ENCODE measurements at regions of chr12 and their contacts with region 1.

Region 1: DNA sequence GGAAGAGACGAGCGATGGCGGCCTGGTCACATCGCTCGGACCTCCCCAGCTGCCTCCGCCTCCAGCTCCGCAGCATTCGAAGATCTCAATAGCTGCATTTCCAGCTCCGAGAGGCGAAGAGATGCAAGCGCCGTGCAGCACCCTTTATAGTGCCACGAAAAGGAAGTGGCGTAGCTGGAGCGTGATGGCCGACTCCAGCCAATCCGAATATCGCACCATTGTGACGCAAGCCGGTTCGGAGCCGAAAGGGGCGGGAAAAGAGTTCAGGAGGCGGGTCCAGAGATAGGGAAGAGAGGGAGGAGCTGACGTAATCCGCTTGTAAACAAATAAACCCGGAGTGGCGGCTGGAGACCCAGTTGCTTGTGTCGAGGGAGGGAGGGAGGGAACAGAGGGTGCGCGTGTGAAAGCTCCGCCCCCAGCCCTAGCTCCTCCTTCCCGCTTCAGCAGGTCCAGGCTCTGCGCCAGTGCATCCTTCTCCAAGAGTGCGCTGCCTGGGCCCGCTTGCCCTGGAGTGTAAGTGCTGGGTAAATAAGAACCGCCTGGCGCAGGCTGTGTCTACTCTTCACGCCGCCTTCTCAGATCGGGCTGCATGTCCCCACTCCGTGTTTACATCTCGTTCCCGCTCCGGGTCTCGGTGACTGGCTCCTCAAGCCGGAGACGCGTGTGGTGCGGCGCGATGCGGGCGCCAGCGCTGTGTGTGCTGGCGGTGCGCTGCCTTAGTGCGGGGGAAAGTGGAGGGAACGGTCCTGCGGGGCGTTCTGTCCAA is at the start of gene BTG1:
- DNase-seq: peak; percentile 99
- ATAC-seq: peak; percentile 84
- H3K4me3 ChIP-seq: peak within 1 kb of the TSS; percentile 54 to 78
- H3K27ac ChIP-seq: peak within 1 kb of the TSS; percentile 80
- H3K4me1 ChIP-seq: peaks cover 5 to 18% of the 10 kb centered on the region in 2 experiments; a peak in 3 of 4 replicates
- H3K27me3 ChIP-seq: no peaks in the 10 kb centered on the region
- CTCF ChIP-seq: no peak
- POLR2A ChIP-seq: peak; percentile 99
- RAD21 ChIP-seq: peak; percentile 25; the same call in 1 of the 2 replicates
- total RNA-seq, gene BTG1: 57.3 TPM

Region 2: DNA sequence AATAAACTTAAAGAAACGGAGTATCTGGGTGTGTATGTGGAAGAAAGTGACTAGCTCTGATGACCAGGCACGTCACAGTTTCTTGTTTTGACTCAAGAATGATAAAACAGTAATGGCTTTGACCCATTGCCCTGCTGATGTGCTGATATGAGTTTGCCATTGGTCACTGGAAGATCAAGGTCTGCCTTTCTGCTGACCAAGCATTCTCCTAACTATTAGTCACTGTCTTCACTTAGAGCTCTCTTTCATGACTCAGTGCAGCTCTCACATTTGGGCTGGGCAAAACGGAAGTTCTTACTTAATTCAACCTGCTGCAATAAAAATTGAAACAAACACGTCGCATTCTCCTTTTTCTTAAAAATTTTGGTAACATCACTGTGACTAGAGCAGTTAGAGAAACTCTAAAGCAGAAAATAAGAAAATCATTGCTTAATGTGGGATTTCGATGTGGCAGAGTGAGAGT is 366.9 kb before region 1 on chr12:
- CTCF ChIA-PET with region 1: interaction called, 4 read pairs
- POLR2A ChIA-PET with region 1: interaction called, 13 read pairs
- RAD21 ChIA-PET with region 1: no interaction called
- intact Hi-C with region 1: loop called (anchors 10 kb)
- DNase-seq: peak; percentile 98
- ATAC-seq: peak; percentile 91
- H3K4me3 ChIP-seq: peak overlapping the region; percentile 13 to 40; a peak in 3 of 4 replicates
- H3K27ac ChIP-seq: no peak overlapping the region
- H3K4me1 ChIP-seq: peaks cover 17 to 48% of the 10 kb centered on the region in 2 experiments
- H3K27me3 ChIP-seq: no peaks in the 10 kb centered on the region
- CTCF ChIP-seq: no peak
- POLR2A ChIP-seq: no peak
- RAD21 ChIP-seq: no peak; the same call in 1 of the 2 replicates

Region 3: DNA sequence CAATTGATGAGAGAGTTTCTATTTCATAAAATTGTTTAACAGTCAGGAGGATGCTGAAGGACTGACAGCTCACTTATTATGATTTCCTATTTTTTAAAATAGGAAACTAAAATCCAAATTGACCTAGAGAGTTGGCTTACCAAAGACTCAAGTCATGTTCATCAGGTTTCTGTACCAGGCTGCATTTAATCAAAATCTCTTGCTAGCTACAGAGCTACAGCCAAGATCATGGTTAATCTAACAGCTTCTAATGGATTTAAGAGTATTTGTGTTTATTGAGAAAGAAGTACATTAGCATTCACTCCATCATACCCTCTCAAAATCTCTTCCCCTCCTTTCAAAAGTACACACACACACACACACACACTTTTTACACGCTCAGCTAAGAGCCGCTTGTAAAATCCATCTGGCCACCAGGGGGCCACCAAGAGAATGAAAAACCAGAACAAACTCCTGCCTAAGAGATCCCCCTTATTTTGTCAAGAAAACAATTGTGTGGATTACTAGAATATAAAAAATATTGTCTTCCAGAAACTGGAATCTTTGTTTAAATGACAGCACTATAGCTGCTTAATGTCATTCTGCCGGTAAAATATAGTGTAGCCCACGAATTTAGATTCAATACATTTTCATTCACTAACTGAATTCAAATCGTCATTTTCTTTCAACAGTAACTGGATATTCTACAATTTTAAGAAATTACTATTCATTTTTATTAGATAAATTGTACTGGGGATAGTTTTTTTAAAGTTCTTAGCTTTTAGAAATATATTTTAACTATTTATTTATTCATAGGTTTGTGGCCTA is 334.2 kb before region 1 on chr12:
- CTCF ChIA-PET with region 1: interaction called, 4 read pairs
- POLR2A ChIA-PET with region 1: interaction called, 8 read pairs
- RAD21 ChIA-PET with region 1: no interaction called
- intact Hi-C with region 1: loop called (anchors 5 kb)
- DNase-seq: peak; percentile 53
- ATAC-seq: peak; percentile 84
- H3K4me3 ChIP-seq: no peak overlapping the region
- H3K27ac ChIP-seq: no peak overlapping the region
- H3K4me1 ChIP-seq: no peaks in the 10 kb centered on the region
- H3K27me3 ChIP-seq: no peaks in the 10 kb centered on the region
- CTCF ChIP-seq: peak; percentile 45 to 87 (median 81); a peak in 5 of 6 replicates
- POLR2A ChIP-seq: no peak
- RAD21 ChIP-seq: peak; percentile 67

Region 4: GRCh38 chr12:92162079-92162478 is 16.2 kb after region 1 on chr12:
- CTCF ChIA-PET with region 1: no interaction called
- POLR2A ChIA-PET with region 1: interaction called, 24 read pairs
- RAD21 ChIA-PET with region 1: no interaction called
- intact Hi-C with region 1: no loop called
- DNase-seq: no peak
- ATAC-seq: no peak
- H3K4me3 ChIP-seq: no peak overlapping the region
- H3K27ac ChIP-seq: no peak overlapping the region
- H3K4me1 ChIP-seq: peaks cover 0 to 11% of the 10 kb centered on the region in 2 experiments; a peak in 2 of 4 replicates
- H3K27me3 ChIP-seq: no peaks in the 10 kb centered on the region
- CTCF ChIP-seq: no peak
- POLR2A ChIP-seq: no peak
- RAD21 ChIP-seq: no peak